Activated CD4-positive, alpha-beta T cell treated with anti-CD3 and anti-CD28 coated beads, Interleukin-2, amount 10 ng/mL, durations not matched to agents 24 days and 14 days (primary cell): ENCODE measurements at regions of chr4 and their contacts with region 1.

Region 1: DNA sequence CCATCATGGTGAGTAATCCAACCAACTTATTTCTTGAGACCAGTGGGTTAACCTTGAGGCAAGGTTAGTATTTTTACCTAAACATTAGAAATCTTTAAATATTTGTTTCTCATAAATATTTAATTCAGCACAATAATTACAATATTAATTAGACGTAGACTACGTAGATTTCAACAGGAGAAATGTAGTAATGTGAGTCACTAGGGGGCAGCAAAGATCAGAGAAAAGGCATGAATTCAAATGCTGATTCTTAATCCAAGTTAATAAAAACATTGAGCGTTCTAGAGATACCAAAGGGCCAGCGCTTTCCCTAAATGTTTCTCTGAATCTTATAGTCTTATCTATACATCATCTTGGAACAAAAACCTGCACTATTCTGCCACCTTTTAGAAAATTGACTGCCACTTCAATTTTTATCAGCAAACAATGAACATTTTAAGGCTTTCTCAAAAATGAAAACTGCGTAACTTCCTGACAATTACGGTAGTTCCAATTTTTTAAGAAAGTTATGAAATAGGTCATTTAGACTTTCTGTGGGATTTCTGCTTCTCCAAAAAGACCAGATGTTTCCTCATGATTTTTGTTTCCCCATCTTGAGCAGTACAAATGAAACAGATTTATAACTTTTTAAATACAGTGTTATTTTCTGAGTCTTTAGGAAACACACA is 180.7 kb downstream of the GASK1B start:
- DNase-seq: peak; percentile 70
- H3K4me3 Mint-ChIP-seq: no peak overlapping the region
- H3K27ac Mint-ChIP-seq: no peak overlapping the region
- H3K4me1 Mint-ChIP-seq: no peaks in the 10 kb centered on the region
- H3K27me3 Mint-ChIP-seq: no peaks in the 10 kb centered on the region

Region 2: DNA sequence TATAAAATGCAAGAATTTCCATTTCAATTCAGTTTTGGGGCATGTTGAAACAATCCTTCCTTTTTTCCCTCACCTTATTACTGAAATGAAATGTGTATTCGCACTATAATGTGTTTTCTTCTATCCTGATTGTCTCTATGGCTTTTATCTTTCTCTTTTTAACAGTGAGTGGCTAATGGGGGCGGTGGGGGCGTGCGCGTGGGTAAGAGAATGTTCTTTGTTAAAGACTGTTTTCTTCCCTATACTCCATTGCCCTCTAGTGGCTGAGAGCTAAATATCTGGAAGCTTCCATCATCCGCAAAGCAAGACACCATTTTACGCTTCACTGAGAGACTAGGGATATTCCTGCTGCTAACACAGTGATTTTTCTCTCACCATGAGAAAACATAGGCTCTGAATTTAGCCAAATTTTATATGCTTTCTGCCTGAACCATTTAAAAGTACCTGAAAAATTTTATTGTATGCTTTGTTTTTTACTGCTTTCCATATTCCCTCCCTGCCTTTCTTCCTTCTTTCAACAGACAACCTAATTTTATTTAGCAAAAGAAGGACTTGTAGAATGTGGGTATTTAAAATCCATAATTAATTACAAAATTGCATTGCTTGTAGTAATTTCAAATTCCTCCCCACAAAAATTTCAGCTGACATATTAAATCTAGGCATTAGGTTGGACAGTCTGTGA is 13.4 kb before region 1 on chr4:
- intact Hi-C with region 1: no loop called
- DNase-seq: peak; percentile 68
- H3K4me3 Mint-ChIP-seq: no peak overlapping the region
- H3K27ac Mint-ChIP-seq: no peak overlapping the region
- H3K4me1 Mint-ChIP-seq: peaks cover 2% of the 10 kb centered on the region
- H3K27me3 Mint-ChIP-seq: peaks cover 4% of the 10 kb centered on the region

Region 3: DNA sequence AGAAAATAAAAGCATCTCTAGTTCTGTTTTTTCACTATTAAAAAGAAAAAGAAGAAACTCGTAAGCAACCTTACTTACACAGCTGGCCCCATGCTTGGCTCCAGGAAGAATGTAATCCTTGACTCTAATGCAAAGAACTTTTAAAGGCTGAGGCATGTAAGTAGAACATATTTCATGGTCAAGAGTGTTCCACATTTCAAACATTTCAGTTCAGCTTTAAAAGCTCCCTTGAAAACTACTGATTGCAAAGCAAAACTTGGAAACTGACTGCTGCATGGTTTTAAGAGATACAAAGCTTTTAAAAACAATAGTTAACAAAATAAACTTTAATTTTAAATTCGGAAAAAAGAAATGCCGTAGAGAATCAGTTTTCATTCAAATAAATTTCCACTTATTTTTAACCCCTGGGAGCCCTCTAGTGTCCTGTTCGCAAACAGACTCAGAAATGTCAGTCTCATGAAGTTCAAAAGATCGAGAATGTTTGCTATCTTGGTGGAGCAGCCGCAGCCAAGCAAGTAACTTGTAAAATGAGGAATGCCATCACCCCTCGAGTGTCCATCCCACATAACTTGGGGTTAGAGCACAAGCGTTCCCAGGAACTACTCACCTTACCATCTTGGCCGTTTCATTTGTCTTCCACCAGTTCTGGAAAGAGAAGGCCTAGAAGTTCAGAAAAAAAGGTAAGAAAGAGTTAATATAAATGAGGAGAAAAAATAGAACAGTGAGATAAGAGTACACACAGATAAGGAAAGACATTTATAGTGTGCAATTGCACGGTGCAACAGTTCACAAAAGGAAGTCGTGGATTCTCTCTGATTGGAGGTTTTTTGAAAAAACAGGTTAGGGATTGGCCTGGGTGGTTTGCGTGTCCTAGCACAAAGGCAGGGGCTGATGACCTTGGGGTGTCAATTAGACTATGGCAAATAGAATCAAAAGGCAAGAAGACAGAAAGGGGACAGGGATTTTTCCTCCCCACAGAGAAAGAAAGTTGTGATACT is 180.4 kb after region 1 on chr4 and contains the start of gene GASK1B:
- intact Hi-C with region 1: loop called (anchors 1 kb)
- DNase-seq: no peak
- H3K4me3 Mint-ChIP-seq: no peak within 1 kb of the TSS
- H3K27ac Mint-ChIP-seq: no peak within 1 kb of the TSS
- H3K4me1 Mint-ChIP-seq: no peaks in the 10 kb centered on the region
- H3K27me3 Mint-ChIP-seq: peaks cover 36% of the 10 kb centered on the region
- total RNA-seq, gene GASK1B: not detected in 2 replicates